HepG2 (cell line): ENCODE measurements at regions of chr17 and their contacts with region 1.

Region 1: GRCh38 chr17:66906321-66907278 is 57.9 kb upstream of the CACNG4 start:
- DNase-seq: peak; percentile 74
- ATAC-seq: peak; percentile 45
- H3K4me3 ChIP-seq: no peak overlapping the region
- H3K27ac ChIP-seq: no peak overlapping the region
- H3K4me1 ChIP-seq: peaks cover 12% of the 10 kb centered on the region
- H3K27me3 ChIP-seq: peaks cover 3 to 35% of the 10 kb centered on the region in 2 experiments; a peak in 4 of 5 replicates
- CTCF ChIP-seq: peak; percentile 94
- EP300 ChIP-seq: no peak; a peak in 1 of 4 replicates
- POLR2A ChIP-seq: no peak
- RAD21 ChIP-seq: peak; percentile 86

Region 2: GRCh38 chr17:66191593-66192382 is 714.8 kb before region 1 on chr17 and contains the start of gene CEP112:
- CTCF ChIA-PET with region 1: no interaction called
- POLR2A ChIA-PET with region 1: no interaction called
- in situ Hi-C with region 1: loop called (anchors 10 kb)
- intact Hi-C with region 1: no loop called
- DNase-seq: peak; percentile 79
- ATAC-seq: peak; percentile 82
- H3K4me3 ChIP-seq: peak within 1 kb of the TSS; percentile 78 to 86 (median 79)
- H3K27ac ChIP-seq: peak within 1 kb of the TSS; percentile 19
- H3K4me1 ChIP-seq: peaks cover 23% of the 10 kb centered on the region
- H3K27me3 ChIP-seq: no peaks in the 10 kb centered on the region; a peak in 1 of 5 replicates
- CTCF ChIP-seq: no peak
- EP300 ChIP-seq: no peak
- POLR2A ChIP-seq: 0 out of 4 replicates have a peak, but pooled peaks of 1 of the 2 experiments have one; percentile 31
- RAD21 ChIP-seq: no peak
- total RNA-seq, gene CEP112: 2.7 and 3.4 TPM in 2 replicates

Region 3: DNA sequence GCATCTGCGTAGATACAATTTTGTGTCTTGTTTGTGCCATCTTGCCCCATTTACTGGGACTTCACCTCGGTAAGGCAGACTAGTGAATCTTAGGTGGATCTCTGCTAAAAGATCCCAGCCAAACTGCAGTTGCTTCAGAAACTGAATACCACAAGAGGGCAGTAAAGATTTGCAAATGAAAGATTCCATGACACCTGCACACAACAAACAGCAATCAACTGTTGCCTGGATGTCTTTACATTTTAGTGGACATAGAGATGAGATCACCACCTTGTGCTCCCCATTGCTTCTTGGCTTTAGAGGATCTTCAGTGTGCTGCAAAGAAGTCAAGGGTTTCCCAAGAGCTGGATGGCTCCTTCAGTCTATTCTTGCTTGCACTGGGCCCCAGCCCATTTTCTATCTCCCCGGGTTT is 190.8 kb before region 1 on chr17:
- CTCF ChIA-PET with region 1: interaction called, 36 read pairs
- POLR2A ChIA-PET with region 1: no interaction called
- in situ Hi-C with region 1: loop called (anchors 5 kb)
- intact Hi-C with region 1: loop called (anchors 1 kb)
- DNase-seq: peak; percentile 69
- ATAC-seq: peak; percentile 72
- H3K4me3 ChIP-seq: no peak overlapping the region
- H3K27ac ChIP-seq: no peak overlapping the region
- H3K4me1 ChIP-seq: peaks cover 36% of the 10 kb centered on the region
- H3K27me3 ChIP-seq: no peaks in the 10 kb centered on the region
- CTCF ChIP-seq: peak; percentile 87
- EP300 ChIP-seq: no peak
- POLR2A ChIP-seq: no peak
- RAD21 ChIP-seq: peak; percentile 60; the same call in 1 of the 2 replicates

Region 4: GRCh38 chr17:66727639-66728570 is 178.7 kb before region 1 on chr17:
- CTCF ChIA-PET with region 1: interaction called, 7 read pairs
- POLR2A ChIA-PET with region 1: no interaction called
- in situ Hi-C with region 1: no loop called
- intact Hi-C with region 1: loop called (anchors 1 kb)
- DNase-seq: peak; percentile 47
- ATAC-seq: peak; percentile 93
- H3K4me3 ChIP-seq: no peak overlapping the region
- H3K27ac ChIP-seq: no peak overlapping the region
- H3K4me1 ChIP-seq: no peaks in the 10 kb centered on the region
- H3K27me3 ChIP-seq: no peaks in the 10 kb centered on the region
- CTCF ChIP-seq: peak; percentile 89
- EP300 ChIP-seq: no peak
- POLR2A ChIP-seq: no peak
- RAD21 ChIP-seq: peak; percentile 58; the same call in 1 of the 2 replicates